Activated B cell treated with CpG ODN at 0.5 μM for 24 hours (primary cell): ENCODE measurements at regions of chr10 and their contacts with region 1.

Region 1: GRCh38 chr10:50362547-50363125 is 111.3 kb upstream of the ASAH2 start:
- DNase-seq: no peak
- ATAC-seq: peak; percentile 92
- H3K4me3 Mint-ChIP-seq: peak overlapping the region; percentile 29
- H3K27ac Mint-ChIP-seq: peak overlapping the region; percentile 87
- H3K4me1 Mint-ChIP-seq: peaks cover 53% of the 10 kb centered on the region
- H3K27me3 Mint-ChIP-seq: no peaks in the 10 kb centered on the region
- CTCF ChIP-seq: no peak

Region 2: DNA sequence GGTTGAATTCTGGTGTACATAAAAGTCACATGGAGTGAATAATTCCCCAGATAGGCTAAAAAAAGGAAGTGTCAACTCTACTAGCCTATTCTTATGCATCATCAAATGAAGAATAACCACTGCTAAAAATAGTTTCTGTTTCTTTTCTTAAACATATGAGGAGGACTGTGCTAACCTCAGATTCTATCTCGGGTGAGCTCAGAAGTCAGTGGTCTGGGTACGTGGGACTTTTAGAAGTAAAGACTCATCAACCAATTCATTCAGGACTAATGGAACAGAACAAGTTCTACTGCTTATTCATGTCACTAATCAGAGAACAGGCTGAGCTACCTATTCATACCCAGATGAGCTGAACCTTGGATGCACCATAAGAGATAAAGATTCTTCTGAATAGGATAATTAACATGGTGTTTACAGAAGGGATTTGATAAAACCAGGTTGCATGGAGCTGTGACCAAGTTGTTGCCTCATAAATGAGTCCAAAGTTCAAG is 101.8 kb before region 1 on chr10:
- CTCF ChIA-PET with region 1: no interaction called
- POLR2A ChIA-PET with region 1: no interaction called
- intact Hi-C with region 1: loop called (anchors 1 kb)
- DNase-seq: no peak
- ATAC-seq: peak; percentile 97
- H3K4me3 Mint-ChIP-seq: peak overlapping the region; percentile 57
- H3K27ac Mint-ChIP-seq: peak overlapping the region; percentile 60
- H3K4me1 Mint-ChIP-seq: peaks cover 36% of the 10 kb centered on the region
- H3K27me3 Mint-ChIP-seq: peaks cover 12% of the 10 kb centered on the region
- CTCF ChIP-seq: no peak

Region 3: GRCh38 chr10:50336140-50336539 is 26.5 kb before region 1 on chr10:
- CTCF ChIA-PET with region 1: no interaction called
- POLR2A ChIA-PET with region 1: no interaction called
- intact Hi-C with region 1: no loop called
- DNase-seq: no peak
- ATAC-seq: no peak
- H3K4me3 Mint-ChIP-seq: peak overlapping the region; percentile 41
- H3K27ac Mint-ChIP-seq: peak overlapping the region; percentile 25
- H3K4me1 Mint-ChIP-seq: peaks cover 19% of the 10 kb centered on the region
- H3K27me3 Mint-ChIP-seq: no peaks in the 10 kb centered on the region
- CTCF ChIP-seq: no peak

Region 4: GRCh38 chr10:50347394-50347802 is 15.2 kb before region 1 on chr10:
- CTCF ChIA-PET with region 1: no interaction called
- POLR2A ChIA-PET with region 1: no interaction called
- intact Hi-C with region 1: loop called (anchors 1 kb)
- DNase-seq: no peak
- ATAC-seq: peak; percentile 89
- H3K4me3 Mint-ChIP-seq: peak overlapping the region; percentile 36
- H3K27ac Mint-ChIP-seq: peak overlapping the region; percentile 81
- H3K4me1 Mint-ChIP-seq: peaks cover 26% of the 10 kb centered on the region
- H3K27me3 Mint-ChIP-seq: no peaks in the 10 kb centered on the region
- CTCF ChIP-seq: no peak

Region 5: GRCh38 chr10:50396491-50397311 is 34.1 kb after region 1 on chr10:
- CTCF ChIA-PET with region 1: no interaction called
- POLR2A ChIA-PET with region 1: no interaction called
- intact Hi-C with region 1: loop called (anchors 2 kb)
- DNase-seq: no peak
- ATAC-seq: peak; percentile 90
- H3K4me3 Mint-ChIP-seq: peak overlapping the region; percentile 42
- H3K27ac Mint-ChIP-seq: peak overlapping the region; percentile 69
- H3K4me1 Mint-ChIP-seq: peaks cover 32% of the 10 kb centered on the region
- H3K27me3 Mint-ChIP-seq: no peaks in the 10 kb centered on the region
- CTCF ChIP-seq: no peak

Region 6: DNA sequence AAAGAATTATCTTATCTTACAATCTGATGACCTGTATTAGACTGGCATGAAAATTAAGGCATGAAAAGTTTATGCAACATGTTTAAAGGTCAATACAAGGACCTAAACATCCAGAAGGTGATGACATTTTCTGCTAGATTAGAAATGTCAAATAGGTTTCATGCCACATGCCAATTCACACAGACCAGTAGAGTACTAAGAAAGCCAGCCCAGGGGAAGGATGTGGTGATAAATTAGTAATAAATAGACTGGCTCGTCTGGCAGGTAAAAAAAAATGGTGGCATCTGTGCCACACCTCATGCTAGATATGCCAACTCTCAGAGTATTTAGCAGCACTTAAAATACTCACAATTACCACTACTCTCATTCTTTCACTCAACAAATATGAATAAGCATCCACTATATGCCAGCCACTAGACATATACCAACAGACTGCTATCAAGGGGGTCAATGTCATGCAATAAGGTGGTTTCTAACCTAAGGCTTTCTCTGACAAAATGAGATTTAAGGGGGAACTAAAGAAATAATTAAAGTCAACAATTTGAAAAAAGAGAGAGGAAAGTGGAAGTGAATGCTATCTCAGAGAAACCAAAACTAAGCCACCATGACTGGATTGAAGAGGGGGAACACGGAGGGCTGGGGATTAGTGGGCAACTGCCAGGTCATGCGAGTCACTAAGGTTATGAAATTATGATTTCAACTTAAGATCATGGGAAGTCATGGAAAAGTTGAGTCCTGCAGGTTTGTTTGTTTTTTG is 177.6 kb after region 1 on chr10:
- CTCF ChIA-PET with region 1: no interaction called
- POLR2A ChIA-PET with region 1: no interaction called
- intact Hi-C with region 1: loop called (anchors 2 kb)
- DNase-seq: no peak
- ATAC-seq: peak; percentile 66
- H3K4me3 Mint-ChIP-seq: peak overlapping the region; percentile 54
- H3K27ac Mint-ChIP-seq: peak overlapping the region; percentile 65
- H3K4me1 Mint-ChIP-seq: peaks cover 69% of the 10 kb centered on the region
- H3K27me3 Mint-ChIP-seq: no peaks in the 10 kb centered on the region
- CTCF ChIP-seq: no peak